Activated CD4-positive, alpha-beta memory T cell treated with anti-CD3 and anti-CD28 coated beads, Interleukin-2, amount 10 ng/mL, durations not matched to agents 7 days and 5 days (primary cell): ENCODE measurements at regions of chr1 and their contacts with region 1.

Region 1: DNA sequence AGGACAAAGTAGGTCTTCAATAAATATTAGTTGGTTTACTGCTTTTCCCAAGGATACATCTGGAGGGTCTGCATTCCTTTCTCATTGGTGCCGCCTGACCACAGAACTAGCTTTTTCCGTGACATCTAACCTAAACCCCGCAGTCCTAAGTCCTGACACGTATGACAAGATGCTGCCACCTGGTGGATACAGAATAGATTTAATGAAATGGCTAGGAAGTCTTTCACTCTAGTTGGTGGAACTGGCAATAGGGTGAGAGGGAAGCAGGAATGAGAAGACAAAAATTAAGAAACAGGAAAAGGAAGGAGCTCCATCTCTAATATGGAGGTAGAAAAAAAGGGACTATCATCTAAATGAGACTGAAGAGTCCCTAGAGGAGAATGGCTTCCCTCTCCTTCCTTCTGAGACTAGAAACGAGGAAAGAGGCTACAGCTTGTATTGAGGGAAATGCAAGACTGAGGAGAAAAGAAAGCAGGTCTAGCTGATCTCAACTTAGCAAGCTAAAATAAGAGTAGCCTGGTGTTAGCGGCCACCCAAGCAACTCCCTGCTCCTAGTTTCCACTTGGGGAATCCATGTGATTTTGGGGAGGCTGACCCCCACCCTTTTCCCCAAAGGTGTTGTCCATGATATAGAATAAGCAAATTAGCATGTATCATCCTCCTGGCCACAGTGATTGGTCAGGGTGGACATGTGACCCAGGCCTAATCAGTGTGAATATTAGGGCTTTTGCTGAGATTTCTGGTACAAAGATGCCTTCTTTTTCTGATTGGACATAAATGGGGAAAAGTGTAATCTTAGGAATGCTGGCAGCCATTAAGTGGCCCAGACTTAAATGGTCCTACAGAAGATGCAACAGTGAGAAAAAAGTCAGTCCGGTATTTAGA is 5.9 kb downstream of the RFX5 start:
- DNase-seq: peak; percentile 51
- H3K4me3 Mint-ChIP-seq: no peak overlapping the region
- H3K27ac Mint-ChIP-seq: no peak overlapping the region
- H3K4me1 Mint-ChIP-seq: peaks cover 30% of the 10 kb centered on the region
- H3K27me3 Mint-ChIP-seq: no peaks in the 10 kb centered on the region

Region 2: DNA sequence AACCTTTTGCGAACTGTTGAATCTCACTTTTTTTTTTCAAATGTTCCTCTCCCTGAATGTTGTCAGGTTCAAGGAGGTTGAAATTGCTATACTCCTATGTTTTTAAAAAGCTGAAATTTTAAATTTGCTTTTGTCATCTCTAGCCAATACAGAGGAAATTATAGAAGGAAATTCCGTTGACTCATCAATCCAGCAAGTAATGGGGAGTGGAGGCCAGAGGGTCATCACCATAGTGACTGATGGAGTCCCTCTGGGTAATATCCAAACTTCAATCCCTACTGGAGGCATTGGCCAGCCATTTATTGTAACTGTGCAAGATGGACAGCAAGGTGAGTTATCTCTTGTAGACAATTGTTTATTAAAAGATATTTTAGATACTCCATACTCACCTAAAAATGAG is 234.2 kb before region 1 on chr1:
- CTCF ChIA-PET with region 1: interaction called, 16 read pairs
- POLR2A ChIA-PET with region 1: no interaction called
- DNase-seq: no peak
- H3K4me3 Mint-ChIP-seq: no peak overlapping the region
- H3K27ac Mint-ChIP-seq: no peak overlapping the region
- H3K4me1 Mint-ChIP-seq: no peaks in the 10 kb centered on the region
- H3K27me3 Mint-ChIP-seq: no peaks in the 10 kb centered on the region

Region 3: GRCh38 chr1:151281969-151282882 is 58.9 kb before region 1 on chr1 and contains the start of gene ZNF687:
- CTCF ChIA-PET with region 1: interaction called, 31 read pairs
- POLR2A ChIA-PET with region 1: interaction called, 7 read pairs
- DNase-seq: peak; percentile 99
- H3K4me3 Mint-ChIP-seq: peak within 1 kb of the TSS; percentile 95
- H3K27ac Mint-ChIP-seq: peak within 1 kb of the TSS; percentile 98
- H3K4me1 Mint-ChIP-seq: peaks cover 38% of the 10 kb centered on the region
- H3K27me3 Mint-ChIP-seq: no peaks in the 10 kb centered on the region
- total RNA-seq, gene ZNF687: 31.4 to 32.6 TPM

Region 4: GRCh38 chr1:151311589-151312331 is 29.4 kb before region 1 on chr1:
- CTCF ChIA-PET with region 1: interaction called, 37 read pairs
- POLR2A ChIA-PET with region 1: interaction called, 7 read pairs
- DNase-seq: peak; percentile 80
- H3K4me3 Mint-ChIP-seq: no peak overlapping the region
- H3K27ac Mint-ChIP-seq: peak overlapping the region; percentile 86
- H3K4me1 Mint-ChIP-seq: peaks cover 23% of the 10 kb centered on the region
- H3K27me3 Mint-ChIP-seq: no peaks in the 10 kb centered on the region

Region 5: GRCh38 chr1:151352006-151352689 is 11.0 kb after region 1 on chr1:
- CTCF ChIA-PET with region 1: interaction called, 25 read pairs
- POLR2A ChIA-PET with region 1: interaction called, 5 read pairs
- DNase-seq: no peak
- H3K4me3 Mint-ChIP-seq: no peak overlapping the region
- H3K27ac Mint-ChIP-seq: no peak overlapping the region
- H3K4me1 Mint-ChIP-seq: peaks cover 10% of the 10 kb centered on the region
- H3K27me3 Mint-ChIP-seq: peaks cover 2% of the 10 kb centered on the region

Region 6: DNA sequence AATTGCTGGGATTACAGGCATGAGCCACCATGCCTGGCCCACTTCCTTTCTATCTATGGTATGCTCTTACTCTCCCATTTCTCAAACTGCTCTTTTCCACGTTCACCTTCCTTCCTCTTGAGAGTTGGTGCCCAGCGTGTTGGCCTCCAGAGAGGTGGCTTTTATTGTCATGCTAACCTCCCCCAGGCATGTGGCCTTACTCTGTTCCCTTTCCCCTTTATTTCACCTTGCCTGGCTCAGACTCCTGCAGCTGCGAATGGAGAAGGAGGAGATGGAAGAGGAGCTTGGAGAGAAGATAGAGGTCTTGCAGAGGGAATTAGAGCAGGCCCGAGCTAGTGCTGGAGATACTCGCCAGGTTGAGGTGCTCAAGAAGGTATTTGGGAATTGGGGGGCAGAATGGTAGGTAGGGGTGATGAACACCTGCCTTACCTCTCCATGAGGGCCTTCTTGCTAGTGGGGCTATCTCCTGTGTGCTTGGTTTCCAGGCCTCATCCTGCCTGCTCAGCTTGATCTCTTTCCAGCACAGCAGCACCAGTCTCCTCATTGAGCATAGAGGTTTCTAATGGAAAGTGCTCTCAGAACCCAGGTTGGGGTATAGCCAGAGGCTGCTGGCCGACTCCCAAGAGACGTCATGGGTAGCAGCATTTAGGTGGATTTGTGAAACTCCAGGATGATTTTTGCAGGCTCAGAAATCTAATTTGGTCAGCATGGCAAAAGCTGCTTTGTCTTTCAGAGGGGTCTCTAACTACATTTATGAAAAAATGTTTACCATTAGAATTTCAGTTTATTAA is 185.8 kb after region 1 on chr1:
- CTCF ChIA-PET with region 1: no interaction called
- POLR2A ChIA-PET with region 1: no interaction called
- DNase-seq: no peak
- H3K4me3 Mint-ChIP-seq: no peak overlapping the region
- H3K27ac Mint-ChIP-seq: no peak overlapping the region
- H3K4me1 Mint-ChIP-seq: no peaks in the 10 kb centered on the region
- H3K27me3 Mint-ChIP-seq: no peaks in the 10 kb centered on the region